GM12878 (cell line): ENCODE measurements at regions of chr4 and their contacts with region 1.

Region 1: DNA sequence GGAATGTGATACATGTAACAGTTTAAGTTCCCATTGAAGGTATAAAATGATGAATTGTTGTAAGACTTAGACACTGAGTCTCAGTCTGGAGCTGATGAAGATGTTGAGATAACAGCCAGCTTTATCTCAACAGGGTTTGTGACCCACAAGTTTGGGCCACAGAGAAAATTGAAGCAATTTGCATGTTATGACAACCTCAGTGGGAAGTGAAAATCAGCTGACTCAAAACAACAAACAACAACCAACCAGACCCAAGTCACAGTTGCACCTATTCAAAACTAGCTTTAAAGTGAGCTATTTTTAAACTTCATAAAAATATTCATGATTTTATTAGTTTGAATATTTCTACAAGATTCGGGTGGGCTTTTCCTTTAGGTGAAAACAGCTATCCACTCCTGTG is 8.0 kb downstream of the SFRP2 start:
- DNase-seq: peak; percentile 9
- ATAC-seq: peak; percentile 54; the same call in 2 of the 3 replicates
- H3K4me3 ChIP-seq: no peak overlapping the region
- H3K27ac ChIP-seq: no peak overlapping the region
- H3K4me1 ChIP-seq: 0 out of 2 replicates have a peak, but pooled peaks cover 3% of the 10 kb centered on the region
- H3K27me3 ChIP-seq: peaks cover 0 to 10% of the 10 kb centered on the region in 2 experiments; a peak in 2 of 4 replicates
- CTCF ChIP-seq: no peak
- EP300 ChIP-seq: no peak
- POLR2A ChIP-seq: no peak
- RAD21 ChIP-seq: no peak

Region 2: GRCh38 chr4:153684971-153685371 is 95.9 kb before region 1 on chr4:
- CTCF ChIA-PET with region 1: no interaction called
- POLR2A ChIA-PET with region 1: no interaction called
- RAD21 ChIA-PET with region 1: no interaction called
- SMC1A ChIA-PET with region 1: no interaction called
- in situ Hi-C with region 1: no loop called
- intact Hi-C with region 1: no loop called
- DNase-seq: no peak
- ATAC-seq: no peak; the same call in 2 of the 3 replicates
- H3K4me3 ChIP-seq: no peak overlapping the region
- H3K27ac ChIP-seq: no peak overlapping the region
- H3K4me1 ChIP-seq: peaks cover 6% of the 10 kb centered on the region; the same call in 1 of the 2 replicates
- H3K27me3 ChIP-seq: peaks cover 6 to 26% of the 10 kb centered on the region in 2 experiments
- CTCF ChIP-seq: no peak
- EP300 ChIP-seq: no peak
- POLR2A ChIP-seq: no peak
- RAD21 ChIP-seq: no peak

Region 3: GRCh38 chr4:154029171-154029570 is 248.3 kb after region 1 on chr4:
- CTCF ChIA-PET with region 1: no interaction called
- POLR2A ChIA-PET with region 1: interaction called, 10 read pairs
- RAD21 ChIA-PET with region 1: interaction called, 3 read pairs
- SMC1A ChIA-PET with region 1: no interaction called
- in situ Hi-C with region 1: no loop called
- intact Hi-C with region 1: no loop called
- DNase-seq: no peak
- ATAC-seq: no peak
- H3K4me3 ChIP-seq: no peak overlapping the region
- H3K27ac ChIP-seq: no peak overlapping the region
- H3K4me1 ChIP-seq: no peaks in the 10 kb centered on the region
- H3K27me3 ChIP-seq: no peaks in the 10 kb centered on the region
- CTCF ChIP-seq: no peak
- EP300 ChIP-seq: no peak
- POLR2A ChIP-seq: no peak
- RAD21 ChIP-seq: no peak

Region 4: DNA sequence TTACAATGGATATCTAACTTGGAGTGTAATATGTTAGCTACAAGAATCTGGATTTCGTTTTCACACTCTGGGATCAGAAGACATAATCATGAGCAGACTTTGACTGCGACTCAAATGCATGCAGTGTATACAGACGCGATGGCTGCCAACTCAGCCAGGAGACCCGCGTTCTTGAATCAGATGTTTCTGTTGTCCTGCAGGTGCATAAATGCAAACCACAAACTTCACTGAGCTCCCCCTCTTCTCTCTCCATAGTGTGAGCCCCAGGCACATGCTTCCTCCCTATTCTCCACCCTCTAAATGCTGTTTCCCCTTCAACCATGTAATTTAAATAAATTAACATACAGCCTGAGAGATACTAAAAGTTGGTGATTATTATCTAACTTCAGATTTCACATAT is 362.8 kb after region 1 on chr4:
- CTCF ChIA-PET with region 1: no interaction called
- POLR2A ChIA-PET with region 1: no interaction called
- RAD21 ChIA-PET with region 1: no interaction called
- SMC1A ChIA-PET with region 1: no interaction called
- in situ Hi-C with region 1: no loop called
- intact Hi-C with region 1: no loop called
- DNase-seq: no peak
- ATAC-seq: no peak
- H3K4me3 ChIP-seq: no peak overlapping the region
- H3K27ac ChIP-seq: no peak overlapping the region
- H3K4me1 ChIP-seq: no peaks in the 10 kb centered on the region
- H3K27me3 ChIP-seq: no peaks in the 10 kb centered on the region
- CTCF ChIP-seq: no peak
- EP300 ChIP-seq: no peak
- POLR2A ChIP-seq: no peak
- RAD21 ChIP-seq: no peak